Head of caudate nucleus (tissue), 42 donors: ENCODE measurements at regions of chr12 and their contacts with region 1.

Region 1: DNA sequence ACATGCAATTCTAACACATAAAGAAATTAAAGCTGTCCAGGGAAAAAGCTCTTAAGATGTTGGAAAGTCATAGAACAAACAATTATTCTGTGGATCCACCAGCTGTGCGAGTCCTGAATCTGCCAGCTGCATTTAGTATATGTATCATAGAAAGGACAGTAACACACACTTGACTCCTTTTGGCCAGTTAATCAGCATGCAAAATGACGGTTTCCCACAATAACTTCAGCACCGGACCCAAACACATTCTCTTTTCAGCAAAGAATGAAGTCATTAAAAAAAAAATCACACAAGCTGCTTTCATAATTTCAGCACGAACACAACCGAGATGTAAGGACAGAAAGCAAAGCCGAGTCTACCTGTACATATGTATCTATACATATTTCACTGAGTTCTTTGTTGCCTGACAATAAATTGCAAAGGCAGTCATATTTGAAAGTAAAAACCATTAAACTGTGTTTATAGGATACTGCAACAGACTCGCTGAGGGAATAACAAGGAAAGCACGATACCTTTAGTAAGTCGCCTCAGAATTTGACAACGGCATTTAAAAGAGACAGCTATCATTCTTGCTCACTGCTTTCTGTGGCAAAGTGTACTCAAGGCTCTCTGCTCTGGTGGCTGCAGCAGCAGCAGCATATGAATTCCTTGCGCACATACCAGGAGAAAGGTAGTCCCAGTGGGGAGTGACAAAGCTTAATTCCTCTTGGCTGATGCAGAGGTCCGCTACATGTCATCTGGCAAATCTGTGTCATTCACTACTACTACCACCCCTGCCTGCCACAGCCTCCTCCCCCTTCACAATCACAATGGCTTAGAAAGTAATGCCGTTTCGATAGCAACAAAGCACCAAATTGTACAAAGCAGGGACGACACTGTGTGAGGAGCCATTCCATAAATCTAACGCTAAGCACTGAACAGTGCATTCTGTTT is at the start of gene GRIP1:
- DNase-seq: peak in 23 of 42 donors; percentile 5 to 58 (median 21)

Region 2: DNA sequence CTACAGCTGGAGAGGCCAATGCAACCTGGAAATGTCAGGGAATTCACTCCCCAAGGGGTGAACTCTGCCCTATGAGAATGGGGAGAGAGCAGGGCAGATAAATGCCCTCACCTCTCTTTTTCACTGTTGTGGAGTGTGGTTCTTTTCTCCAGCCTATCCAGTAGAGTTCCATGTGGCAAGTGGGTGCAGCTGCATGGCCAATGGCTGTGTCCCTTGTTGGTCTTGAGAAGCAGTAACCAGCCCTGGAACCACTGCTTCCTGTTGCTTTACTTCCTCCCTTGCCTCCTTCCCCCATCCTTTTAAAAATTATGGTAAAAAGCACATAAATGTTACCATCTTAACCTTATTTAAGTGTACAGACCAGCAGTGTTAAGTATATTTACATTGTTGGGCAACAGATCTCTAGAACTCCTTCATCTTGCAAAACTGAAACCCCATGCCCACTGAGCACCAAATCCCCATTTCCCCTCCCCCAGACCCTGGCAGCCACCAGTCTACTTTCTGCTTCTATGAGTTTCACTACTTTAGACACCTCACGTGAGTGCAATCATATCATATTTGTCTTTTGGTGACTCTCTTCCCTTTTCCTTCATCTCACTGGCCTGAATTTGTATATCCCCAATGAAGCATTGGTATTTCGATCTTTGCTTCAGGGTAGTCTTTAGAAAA is 77.3 kb after region 1 on chr12:
- intact Hi-C with region 1: no loop called
- DNase-seq: no peak

Region 3: GRCh38 chr12:66860752-66861750 is 182.4 kb after region 1 on chr12:
- intact Hi-C with region 1: loop called (anchors 10 kb)
- DNase-seq: peak; percentile 19 to 87 (median 66)